T-cell (primary cell): ENCODE measurements at regions of chr2 and their contacts with region 1.

Region 1: GRCh38 chr2:240021488-240022104 is 3.5 kb downstream of the NDUFA10 start:
- DNase-seq: peak; percentile 19 to 71 (median 49)
- ATAC-seq: no peak
- H3K4me3 ChIP-seq: no peak overlapping the region
- H3K4me3 Mint-ChIP-seq: no peak overlapping the region
- H3K27ac ChIP-seq: no peak overlapping the region
- H3K27ac Mint-ChIP-seq: no peak overlapping the region
- H3K4me1 ChIP-seq: peaks cover 12 to 13% of the 10 kb centered on the region in 2 experiments
- H3K4me1 Mint-ChIP-seq: peaks cover 30 to 53% (median 33%) of the 10 kb centered on the region in 3 donors
- H3K27me3 ChIP-seq: peaks cover 0 to 8% of the 10 kb centered on the region in 2 experiments
- H3K27me3 Mint-ChIP-seq: no peaks in the 10 kb centered on the region

Region 2: GRCh38 chr2:239677453-239678185 is 344.0 kb before region 1 on chr2:
- CTCF ChIA-PET with region 1: no interaction called
- POLR2A ChIA-PET with region 1: no interaction called
- DNase-seq: peak in 1 of 35 experiments; percentile 11
- ATAC-seq: no peak
- H3K4me3 ChIP-seq: no peak overlapping the region
- H3K4me3 Mint-ChIP-seq: no peak overlapping the region
- H3K27ac ChIP-seq: no peak overlapping the region
- H3K27ac Mint-ChIP-seq: no peak overlapping the region
- H3K4me1 ChIP-seq: no peaks in the 10 kb centered on the region
- H3K4me1 Mint-ChIP-seq: no peaks in the 10 kb centered on the region
- H3K27me3 ChIP-seq: peaks cover 0 to 10% of the 10 kb centered on the region in 2 experiments
- H3K27me3 Mint-ChIP-seq: peaks cover 6 to 7% of the 10 kb centered on the region in 2 donors

Region 3: DNA sequence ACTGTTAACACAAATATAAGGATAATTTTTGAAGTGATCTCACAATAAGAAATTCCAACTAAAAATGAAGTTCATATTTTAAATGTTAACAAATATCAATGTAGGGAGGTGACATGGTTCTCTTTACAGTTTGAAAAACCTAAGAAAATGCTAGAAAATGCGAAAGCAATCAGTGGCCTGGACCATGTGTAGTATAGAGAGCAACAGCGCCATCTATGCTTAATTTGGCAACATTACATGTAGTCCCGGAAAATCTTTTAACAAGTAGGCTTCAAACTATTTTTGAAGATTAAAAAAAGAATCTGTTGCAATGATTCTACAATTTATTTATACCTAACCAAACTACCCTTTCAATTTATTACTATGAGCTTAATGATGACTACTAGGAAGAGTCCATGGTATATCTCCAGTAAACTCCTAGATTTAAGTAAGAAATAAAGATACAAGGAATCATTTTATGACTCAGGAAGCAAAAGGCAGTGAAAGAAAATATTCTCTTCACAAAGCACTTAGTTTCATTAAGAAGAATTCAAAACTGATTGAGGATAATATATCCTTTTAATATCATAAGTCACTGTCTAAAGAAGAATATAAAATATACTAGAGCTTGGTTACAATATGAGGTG is 29.8 kb before region 1 on chr2:
- CTCF ChIA-PET with region 1: interaction called in 1 of 2 experiments, 3 read pairs
- POLR2A ChIA-PET with region 1: interaction called in 1 of 2 experiments, 13 read pairs
- DNase-seq: peak in 4 of 35 experiments; percentile 9 to 67 (median 16)
- ATAC-seq: peak in 3 of 4 experiments; percentile 45 to 64 (median 50)
- H3K4me3 ChIP-seq: no peak overlapping the region
- H3K4me3 Mint-ChIP-seq: no peak overlapping the region
- H3K27ac ChIP-seq: no peak overlapping the region
- H3K27ac Mint-ChIP-seq: no peak overlapping the region
- H3K4me1 ChIP-seq: no peaks in the 10 kb centered on the region
- H3K4me1 Mint-ChIP-seq: no peaks in the 10 kb centered on the region
- H3K27me3 ChIP-seq: no peaks in the 10 kb centered on the region
- H3K27me3 Mint-ChIP-seq: no peaks in the 10 kb centered on the region

Region 4: DNA sequence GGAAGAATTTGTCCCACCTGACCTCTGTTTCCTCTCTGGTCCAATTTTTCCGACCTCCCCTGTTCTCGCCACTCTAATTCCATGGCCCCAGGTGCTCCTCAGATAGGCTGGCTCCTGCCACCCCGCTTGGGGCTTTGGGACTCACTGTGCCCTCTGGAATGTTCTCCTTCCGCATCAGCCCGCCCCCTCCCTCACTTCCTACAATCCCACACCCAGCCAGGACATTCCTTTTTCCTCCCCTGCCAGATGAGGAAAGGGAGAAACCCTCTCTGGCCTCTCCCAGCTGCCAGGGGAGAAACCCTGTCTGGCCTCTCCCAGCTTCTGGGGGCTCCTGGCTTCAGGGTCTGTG is 11.7 kb after region 1 on chr2:
- CTCF ChIA-PET with region 1: interaction called in 1 of 2 experiments, 3 read pairs
- POLR2A ChIA-PET with region 1: interaction called in 1 of 2 experiments, 11 read pairs
- DNase-seq: no peak
- ATAC-seq: no peak
- H3K4me3 ChIP-seq: no peak overlapping the region
- H3K4me3 Mint-ChIP-seq: no peak overlapping the region
- H3K27ac ChIP-seq: no peak overlapping the region
- H3K27ac Mint-ChIP-seq: no peak overlapping the region
- H3K4me1 ChIP-seq: no peaks in the 10 kb centered on the region
- H3K4me1 Mint-ChIP-seq: no peaks in the 10 kb centered on the region
- H3K27me3 ChIP-seq: peaks cover 0 to 29% of the 10 kb centered on the region in 2 experiments
- H3K27me3 Mint-ChIP-seq: peaks cover 29 to 34% of the 10 kb centered on the region in 2 donors